ENCODE measurements at regions of chr7 and their contacts with region 1.

Region 1: GRCh38 chr7:92621026-92621540 is 30.9 kb upstream of the FAM133B start:
- DNase-seq: peak; percentile 73
- H3K4me3 ChIP-seq: no peak overlapping the region
- H3K27ac ChIP-seq: peak overlapping the region; percentile 16 to 58 (median 50)
- H3K4me1 ChIP-seq: peaks cover 0 to 13% (median 10%) of the 10 kb centered on the region in 4 donors
- H3K27me3 ChIP-seq: no peaks in the 10 kb centered on the region
- CTCF ChIP-seq: peak; percentile 55 to 71 (median 63)
- EP300 ChIP-seq: no peak
- POLR2A ChIP-seq: no peak

Region 2: DNA sequence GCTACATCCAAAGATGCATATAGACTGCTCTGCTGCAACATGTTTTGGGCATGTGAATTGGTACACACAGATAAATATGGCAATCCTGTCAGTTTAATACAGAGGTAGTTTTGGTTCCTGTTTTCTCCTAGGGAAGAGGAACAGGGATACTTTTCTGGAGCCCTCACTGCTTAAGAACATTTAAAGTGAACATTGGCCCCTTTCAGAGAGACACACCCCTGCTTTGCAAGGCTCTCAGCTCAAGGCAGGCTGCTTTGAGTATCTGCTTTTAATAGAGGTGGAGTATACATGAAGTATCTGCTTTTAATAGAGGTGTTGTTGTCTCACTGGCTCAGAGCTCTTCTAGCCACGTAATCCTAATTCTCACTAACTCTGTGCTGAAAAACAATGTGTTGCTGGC is 525.7 kb before region 1 on chr7:
- intact Hi-C with region 1: no loop called
- DNase-seq: no peak
- H3K4me3 ChIP-seq: no peak overlapping the region
- H3K27ac ChIP-seq: no peak overlapping the region
- H3K4me1 ChIP-seq: no peaks in the 10 kb centered on the region
- H3K27me3 ChIP-seq: no peaks in the 10 kb centered on the region
- CTCF ChIP-seq: no peak
- EP300 ChIP-seq: no peak
- POLR2A ChIP-seq: no peak

Region 3: DNA sequence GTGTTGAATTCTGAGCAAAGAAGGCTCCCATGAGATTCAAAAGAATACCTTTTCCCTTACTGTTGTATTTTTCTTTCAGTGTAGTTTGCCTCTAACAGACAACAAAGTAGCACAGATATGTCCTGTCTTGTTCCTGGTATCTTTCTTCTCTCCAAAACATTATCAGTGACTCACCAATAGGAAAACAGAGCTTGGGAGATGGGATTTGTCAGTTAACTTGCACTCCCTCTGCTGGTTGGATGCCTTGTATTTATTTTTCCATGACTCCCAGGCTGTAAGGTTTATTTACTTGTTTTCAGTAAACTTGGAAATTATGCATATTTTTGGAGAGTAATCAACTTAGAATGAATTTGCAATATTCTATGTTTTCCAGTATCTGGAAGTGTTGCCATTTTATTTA is 367.0 kb after region 1 on chr7:
- intact Hi-C with region 1: loop called (anchors 2 kb)
- DNase-seq: no peak
- H3K4me3 ChIP-seq: no peak overlapping the region
- H3K27ac ChIP-seq: no peak overlapping the region
- H3K4me1 ChIP-seq: peaks cover 0 to 11% (median 0%) of the 10 kb centered on the region in 4 donors
- H3K27me3 ChIP-seq: no peaks in the 10 kb centered on the region
- CTCF ChIP-seq: peak in 2 of 4 experiments; percentile 19 to 34
- EP300 ChIP-seq: no peak
- POLR2A ChIP-seq: no peak

Region 4: GRCh38 chr7:93055543-93056107 is 434.5 kb after region 1 on chr7:
- intact Hi-C with region 1: loop called (anchors 2 kb)
- DNase-seq: no peak
- H3K4me3 ChIP-seq: no peak overlapping the region
- H3K27ac ChIP-seq: no peak overlapping the region
- H3K4me1 ChIP-seq: no peaks in the 10 kb centered on the region
- H3K27me3 ChIP-seq: no peaks in the 10 kb centered on the region
- CTCF ChIP-seq: peak; percentile 53 to 69 (median 59)
- EP300 ChIP-seq: no peak
- POLR2A ChIP-seq: no peak